Naive thymus-derived CD8-positive, alpha-beta T cell (primary cell): ENCODE measurements at regions of chr22 and their contacts with region 1.

Region 1: DNA sequence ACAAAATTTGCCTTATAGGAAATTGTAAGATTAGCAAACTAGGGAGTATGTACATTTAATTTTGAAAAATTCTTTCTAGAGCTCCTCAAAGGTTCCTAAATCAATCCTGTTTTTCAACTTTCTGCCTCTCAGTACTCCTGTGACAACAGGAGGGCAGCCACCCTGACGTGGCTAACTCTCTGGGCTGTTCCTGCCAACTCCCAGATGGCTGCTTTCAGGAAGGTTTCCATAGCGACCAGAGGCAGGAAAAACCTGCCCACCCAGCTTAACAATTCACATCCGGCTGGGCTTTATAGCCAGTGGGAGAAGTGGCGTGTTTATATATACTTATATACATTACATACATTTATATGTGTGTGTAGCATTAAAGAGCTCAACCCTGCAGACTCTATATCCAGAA is 26.5 kb downstream of the SGSM3 start:
- DNase-seq: no peak
- ATAC-seq: no peak
- H3K4me3 Mint-ChIP-seq: peak overlapping the region in 3 of 10 donors; percentile 2 to 64 (median 44)
- H3K27ac Mint-ChIP-seq: peak overlapping the region; percentile 33 to 96 (median 80)
- H3K4me1 Mint-ChIP-seq: peaks cover 38 to 91% (median 90%) of the 10 kb centered on the region in 4 donors
- H3K27me3 Mint-ChIP-seq: no peaks in the 10 kb centered on the region

Region 2: DNA sequence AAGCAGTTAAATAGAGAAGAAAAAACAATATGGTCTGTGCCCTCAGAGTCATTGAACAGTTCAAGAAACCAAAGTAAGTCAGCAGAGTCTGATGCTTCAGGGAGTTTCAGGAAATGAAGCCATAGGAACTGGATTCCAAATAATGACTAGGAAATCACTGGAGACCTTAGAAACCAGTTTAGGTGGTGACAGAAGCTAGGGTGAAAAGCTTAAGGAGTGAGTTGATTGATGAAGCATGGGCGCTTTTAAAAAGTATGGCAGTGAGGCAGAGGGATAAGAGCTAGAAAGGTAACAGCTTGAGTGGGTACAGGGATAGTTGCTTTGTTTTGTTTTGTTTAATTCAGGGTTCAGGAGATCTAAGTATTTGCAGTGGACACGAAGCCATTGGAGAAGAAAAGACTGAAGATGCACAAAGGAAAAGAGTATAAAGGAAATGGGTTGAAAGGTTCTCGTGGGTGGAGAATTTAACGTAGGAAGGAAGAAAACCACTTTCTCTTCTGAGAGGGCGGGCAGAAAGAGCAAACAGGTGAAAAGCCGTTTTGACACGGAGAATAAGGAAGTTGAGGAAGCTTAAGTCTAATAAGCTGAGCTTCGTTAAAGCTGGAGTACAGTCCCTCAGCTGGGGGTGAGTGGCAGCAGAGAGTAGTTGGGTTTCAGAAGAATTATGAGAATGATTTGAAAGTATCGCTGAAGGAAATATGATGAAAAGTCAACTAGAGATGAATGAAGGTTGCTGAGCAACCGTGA is 11.7 kb before region 1 on chr22:
- POLR2A ChIA-PET with region 1: interaction called, 11 read pairs
- DNase-seq: peak in 8 of 10 donors; percentile 20 to 73 (median 49)
- ATAC-seq: peak; percentile 94 to 97
- H3K4me3 Mint-ChIP-seq: peak overlapping the region; percentile 73 to 89 (median 84)
- H3K27ac Mint-ChIP-seq: peak overlapping the region; percentile 89 to 98 (median 96)
- H3K4me1 Mint-ChIP-seq: peaks cover 38 to 71% (median 63%) of the 10 kb centered on the region in 4 donors
- H3K27me3 Mint-ChIP-seq: no peaks in the 10 kb centered on the region

Region 3: GRCh38 chr22:40410317-40410716 is 13.4 kb after region 1 on chr22:
- POLR2A ChIA-PET with region 1: interaction called, 13 read pairs
- DNase-seq: no peak
- ATAC-seq: no peak
- H3K4me3 Mint-ChIP-seq: no peak overlapping the region
- H3K27ac Mint-ChIP-seq: peak overlapping the region in 4 of 10 donors; percentile 46 to 85 (median 56)
- H3K4me1 Mint-ChIP-seq: peaks cover 17 to 33% (median 21%) of the 10 kb centered on the region in 4 donors
- H3K27me3 Mint-ChIP-seq: no peaks in the 10 kb centered on the region

Region 4: DNA sequence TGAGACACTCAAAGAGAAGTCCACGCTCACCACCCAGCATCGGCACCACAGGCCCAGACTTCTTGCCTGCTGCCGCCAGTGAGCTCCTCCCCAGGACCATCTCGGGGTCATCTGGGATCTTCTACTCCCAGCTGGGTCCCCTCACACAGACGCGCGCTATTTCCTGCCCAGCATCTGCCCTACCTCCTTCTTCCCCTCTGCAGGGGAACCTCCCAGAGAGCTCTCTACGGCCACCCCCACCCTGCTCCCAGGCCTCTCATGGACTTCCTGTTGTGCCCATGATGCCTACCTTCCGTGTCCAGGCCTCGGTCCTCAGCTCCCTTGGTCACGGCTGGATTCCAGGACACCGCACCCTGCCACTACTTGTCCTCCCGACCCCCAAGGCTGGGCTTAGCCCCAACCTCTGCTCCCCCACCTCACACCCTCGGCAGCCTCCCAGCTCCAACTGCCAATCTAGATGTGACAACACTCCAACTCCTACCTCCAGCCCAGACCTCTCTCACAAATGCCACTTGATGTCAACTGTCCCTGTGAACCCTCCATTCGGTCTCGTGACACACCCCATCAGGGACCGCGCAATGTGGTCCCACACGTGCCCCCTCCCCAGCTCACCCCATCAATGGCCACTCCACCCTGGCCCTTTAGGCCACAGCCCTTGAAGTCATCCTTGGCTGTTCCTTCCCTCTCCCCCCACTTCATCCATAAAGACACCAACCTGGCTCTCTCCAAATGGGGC is 18.8 kb after region 1 on chr22:
- POLR2A ChIA-PET with region 1: interaction called, 13 read pairs
- DNase-seq: peak in 3 of 10 donors; percentile 17 to 33 (median 23)
- ATAC-seq: peak; percentile 46 to 48
- H3K4me3 Mint-ChIP-seq: peak overlapping the region; percentile 19 to 86 (median 53)
- H3K27ac Mint-ChIP-seq: peak overlapping the region; percentile 88 to 96 (median 94)
- H3K4me1 Mint-ChIP-seq: peaks cover 33 to 63% (median 56%) of the 10 kb centered on the region in 4 donors
- H3K27me3 Mint-ChIP-seq: no peaks in the 10 kb centered on the region